Mammary epithelial cell (primary cell): ENCODE measurements at regions of chr18 and their contacts with region 1.

Region 1: DNA sequence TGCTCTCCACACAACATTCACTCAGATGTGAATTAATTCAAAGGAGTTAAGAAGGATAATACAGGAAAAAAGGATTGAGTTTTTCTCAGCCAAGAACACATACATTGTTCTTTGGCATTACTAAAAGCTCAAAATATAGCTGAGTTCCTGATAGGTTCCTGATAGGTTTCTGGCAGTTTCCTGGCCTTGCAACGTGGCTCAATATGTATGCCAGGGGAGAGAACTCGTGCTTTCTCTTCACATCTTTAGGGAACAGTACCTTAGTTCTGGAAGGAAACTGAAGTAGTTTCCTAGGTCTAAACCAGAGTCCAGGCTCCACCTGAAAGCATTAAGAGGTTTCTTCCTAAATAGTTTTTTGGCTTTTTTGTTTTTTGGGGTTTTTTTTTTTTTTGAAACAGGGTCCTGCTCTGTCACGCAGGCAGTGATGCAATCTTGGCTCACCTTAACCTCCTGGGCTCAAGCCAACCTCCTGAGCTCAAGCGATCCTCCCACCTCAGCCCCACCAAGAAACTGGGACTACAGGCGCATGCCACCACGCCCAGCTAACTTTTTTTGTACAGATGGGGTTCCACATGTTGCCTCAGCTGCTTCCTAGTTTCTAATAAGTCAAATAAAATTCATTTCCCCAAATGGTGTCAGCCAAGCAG is 42.8 kb downstream of the ESCO1 start:
- DNase-seq: peak; percentile 23
- H3K4me3 ChIP-seq: no peak overlapping the region
- H3K27ac ChIP-seq: peak overlapping the region; percentile 40
- H3K4me1 ChIP-seq: no peaks in the 10 kb centered on the region
- H3K27me3 ChIP-seq: no peaks in the 10 kb centered on the region
- CTCF ChIP-seq: no peak

Region 2: DNA sequence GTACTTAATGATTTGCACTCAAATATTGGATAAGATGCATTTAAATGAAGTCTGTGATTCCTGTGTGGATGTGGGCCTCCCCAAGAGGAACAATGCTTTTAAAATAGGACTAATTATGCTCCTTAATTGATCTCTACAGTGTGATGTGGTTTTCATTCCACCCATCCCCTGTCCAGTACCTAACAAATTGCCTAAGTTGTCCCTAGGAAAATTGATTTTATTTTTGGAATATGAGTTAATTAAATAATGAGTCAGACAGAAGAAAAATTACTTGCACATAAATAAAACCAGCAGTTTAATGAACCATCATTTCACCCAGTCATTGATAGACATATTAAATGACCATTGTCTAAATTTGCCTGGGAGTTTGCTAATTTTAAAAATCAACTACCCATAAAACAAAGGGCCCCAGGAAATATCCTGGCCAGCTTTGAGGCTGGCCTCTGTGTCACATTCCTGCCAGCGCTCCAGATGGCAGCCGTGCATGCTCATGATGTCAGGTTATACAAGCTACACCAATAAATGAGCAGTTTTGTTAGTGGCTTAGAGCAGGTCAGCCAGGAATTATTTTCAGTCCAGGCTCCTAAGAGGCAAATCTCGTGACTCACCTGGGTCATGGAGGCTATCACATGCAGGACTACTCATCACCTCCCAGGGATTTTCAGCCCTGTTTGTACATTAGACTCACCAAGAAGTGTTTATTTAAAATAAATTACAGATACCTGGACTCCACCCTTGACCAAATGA is 115.0 kb after region 1 on chr18:
- CTCF ChIA-PET with region 1: no interaction called
- dilution Hi-C with region 1: no loop called
- in situ Hi-C with region 1: loop called in 1 of 2 experiments (anchors 25 kb)
- intact Hi-C with region 1: no loop called
- DNase-seq: peak; percentile 90
- H3K4me3 ChIP-seq: no peak overlapping the region
- H3K27ac ChIP-seq: peak overlapping the region; percentile 77
- H3K4me1 ChIP-seq: peaks cover 44% of the 10 kb centered on the region
- H3K27me3 ChIP-seq: no peaks in the 10 kb centered on the region
- CTCF ChIP-seq: peak in 1 of 2 donors; percentile 8

Region 3: DNA sequence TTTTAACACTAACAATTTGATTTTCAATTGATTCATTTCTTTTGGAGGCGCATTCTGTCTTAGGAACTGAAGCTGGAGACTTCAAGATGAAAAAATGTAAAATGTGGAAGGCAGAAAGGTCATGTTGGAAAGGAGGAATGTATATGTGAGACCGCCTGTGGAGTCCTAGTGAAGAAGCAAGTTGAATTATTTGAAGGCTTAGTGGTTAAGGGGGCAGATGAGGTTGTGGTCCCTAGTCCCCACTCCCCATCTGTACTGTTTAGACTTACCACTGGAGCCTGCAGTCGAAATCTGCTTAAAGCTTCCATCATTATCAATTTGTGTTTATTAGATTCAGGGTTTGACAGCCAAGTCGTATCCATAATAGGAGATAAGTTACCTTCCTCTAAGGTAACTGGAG is 167.5 kb after region 1 on chr18:
- CTCF ChIA-PET with region 1: no interaction called
- dilution Hi-C with region 1: no loop called
- in situ Hi-C with region 1: no loop called
- intact Hi-C with region 1: no loop called
- DNase-seq: no peak
- H3K4me3 ChIP-seq: no peak overlapping the region
- H3K27ac ChIP-seq: no peak overlapping the region
- H3K4me1 ChIP-seq: no peaks in the 10 kb centered on the region
- H3K27me3 ChIP-seq: peaks cover 2% of the 10 kb centered on the region
- CTCF ChIP-seq: no peak

Region 4: GRCh38 chr18:21831413-21831831 is 273.7 kb after region 1 on chr18:
- CTCF ChIA-PET with region 1: interaction called, 11 read pairs
- dilution Hi-C with region 1: no loop called
- in situ Hi-C with region 1: no loop called
- intact Hi-C with region 1: no loop called
- DNase-seq: no peak
- H3K4me3 ChIP-seq: no peak overlapping the region
- H3K27ac ChIP-seq: no peak overlapping the region
- H3K4me1 ChIP-seq: peaks cover under 1% of the 10 kb centered on the region
- H3K27me3 ChIP-seq: no peaks in the 10 kb centered on the region
- CTCF ChIP-seq: no peak

Region 5: GRCh38 chr18:22102953-22103646 is 545.4 kb after region 1 on chr18:
- CTCF ChIA-PET with region 1: no interaction called
- dilution Hi-C with region 1: no loop called
- in situ Hi-C with region 1: no loop called
- intact Hi-C with region 1: no loop called
- DNase-seq: no peak
- H3K4me3 ChIP-seq: no peak overlapping the region
- H3K27ac ChIP-seq: no peak overlapping the region
- H3K4me1 ChIP-seq: no peaks in the 10 kb centered on the region
- H3K27me3 ChIP-seq: peaks cover 3% of the 10 kb centered on the region
- CTCF ChIP-seq: no peak